Mammary epithelial cell (primary cell): ENCODE measurements at regions of chr14 and their contacts with region 1.

Region 1: GRCh38 chr14:56555921-56556570 is 23.6 kb upstream of the TMEM260 start:
- DNase-seq: peak; percentile 21
- H3K4me3 ChIP-seq: no peak overlapping the region
- H3K27ac ChIP-seq: no peak overlapping the region
- H3K4me1 ChIP-seq: no peaks in the 10 kb centered on the region
- H3K27me3 ChIP-seq: no peaks in the 10 kb centered on the region
- CTCF ChIP-seq: peak; percentile 51 to 82

Region 2: DNA sequence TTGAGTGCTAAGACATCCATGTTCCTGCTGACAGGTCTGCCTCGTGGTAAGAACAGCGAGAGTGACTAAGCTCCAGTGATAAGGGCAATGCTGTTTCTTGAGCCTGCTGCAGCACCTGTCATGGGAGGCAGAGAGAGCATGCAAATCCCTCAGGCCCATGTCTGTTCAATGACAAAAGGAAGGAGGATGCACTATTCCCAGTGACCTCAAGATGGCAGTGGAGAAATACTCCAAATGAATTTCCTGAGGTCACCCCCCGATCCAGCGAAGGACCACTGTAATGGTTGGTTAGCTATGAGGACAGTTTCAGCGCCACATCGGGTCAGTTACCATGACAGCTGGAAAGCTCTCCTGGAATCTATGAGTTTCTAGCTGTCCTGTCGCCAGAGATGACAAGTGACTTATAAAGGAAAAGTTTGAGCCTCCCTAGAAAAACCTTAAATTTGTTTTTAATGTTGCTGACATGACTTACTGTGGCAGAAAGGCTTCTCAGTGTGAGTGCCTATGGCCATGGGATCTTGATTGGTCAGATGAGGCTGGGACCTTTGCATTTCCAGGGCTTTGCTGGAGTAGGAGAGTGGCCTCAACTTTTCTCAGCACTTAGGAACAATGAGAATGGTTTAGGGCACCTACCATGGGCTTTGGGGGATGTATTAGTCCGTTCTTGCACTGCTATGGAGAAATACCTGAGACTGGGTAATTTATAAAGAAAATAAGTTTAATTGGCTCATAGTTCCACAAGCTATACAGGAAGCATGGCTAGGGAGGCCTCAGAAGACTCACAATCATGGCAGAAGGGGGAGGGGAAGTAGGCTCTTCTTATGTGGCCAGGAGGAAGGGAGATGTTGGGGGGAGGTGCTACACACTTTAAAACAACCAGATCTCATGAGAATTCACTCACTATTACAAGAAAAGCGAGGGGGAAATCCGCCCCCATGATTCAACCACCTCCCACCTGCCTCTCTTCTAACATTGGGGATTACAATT is 64.5 kb before region 1 on chr14:
- CTCF ChIA-PET with region 1: no interaction called
- dilution Hi-C with region 1: no loop called
- in situ Hi-C with region 1: no loop called
- intact Hi-C with region 1: loop called (anchors 5 kb)
- DNase-seq: peak; percentile 42
- H3K4me3 ChIP-seq: no peak overlapping the region
- H3K27ac ChIP-seq: no peak overlapping the region
- H3K4me1 ChIP-seq: peaks cover 16% of the 10 kb centered on the region
- H3K27me3 ChIP-seq: no peaks in the 10 kb centered on the region
- CTCF ChIP-seq: peak; percentile 60 to 76

Region 3: GRCh38 chr14:56650048-56650447 is 94.0 kb after region 1 on chr14:
- CTCF ChIA-PET with region 1: no interaction called
- dilution Hi-C with region 1: no loop called
- in situ Hi-C with region 1: no loop called
- intact Hi-C with region 1: loop called (anchors 5 kb)
- DNase-seq: no peak
- H3K4me3 ChIP-seq: no peak overlapping the region
- H3K27ac ChIP-seq: no peak overlapping the region
- H3K4me1 ChIP-seq: no peaks in the 10 kb centered on the region
- H3K27me3 ChIP-seq: no peaks in the 10 kb centered on the region
- CTCF ChIP-seq: no peak

Region 4: DNA sequence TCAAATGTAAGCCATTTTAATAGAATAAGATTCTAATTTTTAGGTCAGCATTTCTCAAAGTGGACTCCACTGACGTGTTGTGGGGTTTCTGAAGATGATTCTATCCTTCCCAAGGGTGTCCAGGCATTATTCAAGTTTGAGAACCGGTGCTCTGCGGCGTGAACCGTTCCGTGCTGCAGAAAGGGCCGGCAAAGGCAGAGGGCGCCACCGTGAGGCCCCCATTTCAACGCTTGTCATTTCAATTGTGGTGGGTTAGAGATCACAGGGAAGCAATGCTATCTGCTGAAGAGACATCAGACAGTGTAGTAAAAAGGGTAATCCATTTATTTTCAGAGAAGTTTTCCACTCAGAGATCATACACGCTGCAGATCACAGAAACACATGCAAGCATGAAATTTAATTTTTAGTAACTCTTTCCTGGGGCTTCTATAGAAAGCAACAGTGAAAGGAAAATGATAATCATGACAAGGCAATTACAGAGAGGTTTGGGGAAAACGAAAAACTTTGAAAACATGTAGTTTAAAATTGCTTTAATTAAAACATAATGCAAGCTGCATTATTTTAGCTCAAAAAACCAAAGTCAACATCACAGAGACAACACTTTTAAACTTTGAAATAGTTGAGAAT is 511.0 kb after region 1 on chr14:
- CTCF ChIA-PET with region 1: no interaction called
- dilution Hi-C with region 1: no loop called
- in situ Hi-C with region 1: no loop called
- intact Hi-C with region 1: loop called (anchors 10 kb)
- DNase-seq: peak; percentile 5
- H3K4me3 ChIP-seq: no peak overlapping the region
- H3K27ac ChIP-seq: no peak overlapping the region
- H3K4me1 ChIP-seq: no peaks in the 10 kb centered on the region
- H3K27me3 ChIP-seq: no peaks in the 10 kb centered on the region
- CTCF ChIP-seq: peak; percentile 28 to 37

Region 5: GRCh38 chr14:57293866-57294837 is 738.1 kb after region 1 on chr14:
- CTCF ChIA-PET with region 1: no interaction called
- dilution Hi-C with region 1: no loop called
- in situ Hi-C with region 1: no loop called
- intact Hi-C with region 1: loop called (anchors 1 kb)
- DNase-seq: no peak
- H3K4me3 ChIP-seq: no peak overlapping the region
- H3K27ac ChIP-seq: no peak overlapping the region
- H3K4me1 ChIP-seq: no peaks in the 10 kb centered on the region
- H3K27me3 ChIP-seq: no peaks in the 10 kb centered on the region
- CTCF ChIP-seq: peak in 1 of 2 donors; percentile 24

Region 6: GRCh38 chr14:57378669-57379068 is 822.6 kb after region 1 on chr14:
- CTCF ChIA-PET with region 1: no interaction called
- dilution Hi-C with region 1: no loop called
- in situ Hi-C with region 1: no loop called
- intact Hi-C with region 1: loop called (anchors 1 kb)
- DNase-seq: no peak
- H3K4me3 ChIP-seq: no peak overlapping the region
- H3K27ac ChIP-seq: no peak overlapping the region
- H3K4me1 ChIP-seq: peaks cover 22% of the 10 kb centered on the region
- H3K27me3 ChIP-seq: no peaks in the 10 kb centered on the region
- CTCF ChIP-seq: peak; percentile 18 to 30